ENCODE measurements at regions of chr12 and their contacts with region 1.

Region 1: DNA sequence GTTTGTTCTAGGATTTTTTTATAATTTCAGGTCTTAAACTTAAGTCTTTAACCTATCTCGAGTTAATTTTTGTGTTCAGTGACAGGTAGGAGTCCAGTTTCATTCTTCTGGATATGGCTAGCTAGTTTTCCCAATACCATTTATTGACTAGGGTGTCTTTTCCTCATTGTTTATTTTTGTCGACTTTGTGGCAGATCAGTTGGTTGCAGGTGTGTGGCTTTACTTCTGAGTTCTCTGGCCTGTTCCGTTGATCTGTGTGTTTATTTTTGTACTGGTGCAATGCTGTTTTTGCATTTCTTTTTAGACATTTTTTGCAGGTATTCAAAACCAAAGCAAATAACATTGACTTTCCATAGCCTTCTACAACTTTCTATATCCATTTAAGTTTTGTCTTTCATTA is 121.7 kb downstream of the ETNK1 start:
- DNase-seq: no peak
- ATAC-seq: no peak
- H3K4me3 ChIP-seq: no peak overlapping the region
- H3K27ac ChIP-seq: no peak overlapping the region
- H3K4me1 ChIP-seq: no peaks in the 10 kb centered on the region
- H3K27me3 ChIP-seq: no peaks in the 10 kb centered on the region
- CTCF ChIP-seq: no peak

Region 2: DNA sequence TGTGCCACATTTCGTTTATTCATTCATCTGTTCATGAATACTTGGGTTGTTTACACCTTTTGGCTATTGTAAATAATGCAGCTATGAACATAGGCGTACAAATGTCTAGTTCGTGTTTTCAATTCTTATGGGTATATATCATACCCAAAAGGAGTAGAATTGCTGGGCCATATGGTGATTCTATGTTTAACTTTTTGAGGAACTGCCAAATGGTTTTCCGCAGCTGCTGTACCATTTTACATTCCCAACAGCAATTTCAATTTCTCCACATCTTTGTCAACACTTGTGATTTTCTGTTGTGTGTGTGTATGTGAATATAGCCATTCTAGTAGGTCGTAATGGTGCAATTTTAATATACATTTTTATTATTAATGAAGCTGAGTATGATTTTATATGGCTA is 204.5 kb after region 1 on chr12:
- CTCF ChIA-PET with region 1: no interaction called
- POLR2A ChIA-PET with region 1: no interaction called
- in situ Hi-C with region 1: no loop called
- intact Hi-C with region 1: no loop called
- DNase-seq: no peak
- ATAC-seq: no peak
- H3K4me3 ChIP-seq: no peak overlapping the region
- H3K27ac ChIP-seq: no peak overlapping the region
- H3K4me1 ChIP-seq: no peaks in the 10 kb centered on the region
- H3K27me3 ChIP-seq: no peaks in the 10 kb centered on the region
- CTCF ChIP-seq: no peak

Region 3: DNA sequence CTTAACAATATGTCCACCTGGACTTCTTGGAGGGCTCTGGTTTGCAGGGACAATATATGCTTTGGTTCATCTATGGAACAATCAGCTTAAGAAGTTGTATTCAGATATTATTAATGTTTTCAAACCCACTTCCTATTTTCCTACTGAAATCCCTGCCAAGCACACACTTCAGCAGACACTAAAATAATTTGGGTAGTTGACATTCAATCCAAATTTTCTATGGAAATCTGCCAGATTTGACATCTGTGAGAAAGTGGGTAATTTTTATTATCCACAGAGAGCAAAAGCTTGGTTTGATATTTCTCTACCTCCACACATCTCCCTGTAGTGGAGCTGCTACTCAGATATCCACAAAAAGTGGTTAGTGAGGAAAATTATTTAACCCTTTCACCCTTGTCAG is 1581.5 kb after region 1 on chr12:
- CTCF ChIA-PET with region 1: no interaction called
- POLR2A ChIA-PET with region 1: interaction called, 13 read pairs
- in situ Hi-C with region 1: no loop called
- intact Hi-C with region 1: no loop called
- DNase-seq: no peak
- ATAC-seq: no peak
- H3K4me3 ChIP-seq: no peak overlapping the region
- H3K27ac ChIP-seq: no peak overlapping the region
- H3K4me1 ChIP-seq: no peaks in the 10 kb centered on the region
- H3K27me3 ChIP-seq: no peaks in the 10 kb centered on the region
- CTCF ChIP-seq: no peak

Measured in Panc1 (cell line).